ENCODE measurements at regions of chr20 and their contacts with region 1.

Region 1: DNA sequence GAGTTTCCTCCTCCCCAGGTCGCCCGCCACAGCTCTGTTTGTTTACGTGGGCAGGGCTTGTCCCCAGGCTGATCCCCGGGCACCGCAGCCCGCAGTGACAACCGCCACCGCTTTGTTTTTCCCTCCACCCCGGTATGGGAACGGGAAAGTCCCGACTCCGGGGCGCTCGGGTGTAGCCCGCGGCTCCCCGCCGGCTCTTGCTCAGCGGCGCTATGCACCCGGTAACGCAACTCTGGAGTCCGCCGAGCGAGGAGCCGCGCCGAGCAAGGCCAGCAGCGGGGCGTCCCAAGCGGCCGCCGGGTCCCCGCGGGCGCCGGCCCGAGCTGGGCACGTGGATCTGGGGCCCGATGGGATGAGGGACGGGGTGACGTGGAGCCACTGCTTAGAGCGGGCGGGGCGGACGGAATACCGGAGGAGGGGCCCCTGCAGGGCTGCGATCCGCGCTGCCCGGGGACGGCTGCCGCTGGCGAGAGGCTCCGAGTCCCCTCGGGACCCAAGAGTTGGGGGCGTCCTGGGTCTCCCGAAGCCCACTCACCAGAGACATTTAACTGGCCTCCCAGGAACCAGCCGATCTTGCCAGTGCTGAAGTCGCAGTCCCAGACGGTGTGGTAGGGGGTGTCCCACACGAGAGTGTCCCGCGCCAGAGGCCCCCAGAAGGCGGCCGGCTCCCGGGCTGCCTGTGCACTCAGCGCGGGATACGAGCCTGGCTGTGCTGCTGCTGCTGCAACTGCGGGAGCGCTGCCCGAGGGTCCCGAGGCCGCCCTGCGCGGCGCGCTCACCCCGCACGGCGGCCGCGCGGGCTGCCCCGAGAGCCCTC is 497 bp downstream of the ACSS1 start:
- DNase-seq: peak; percentile 56
- H3K4me3 ChIP-seq: peak overlapping the region; percentile 49 to 66 (median 62)
- H3K27ac ChIP-seq: no peak overlapping the region
- H3K4me1 ChIP-seq: peaks cover 17% of the 10 kb centered on the region
- H3K27me3 ChIP-seq: peaks cover 8% of the 10 kb centered on the region
- CTCF ChIP-seq: no peak

Region 2: GRCh38 chr20:25000268-25000821 is 57.1 kb before region 1 on chr20:
- CTCF ChIA-PET with region 1: no interaction called
- dilution Hi-C with region 1: loop called (anchors 5 kb)
- in situ Hi-C with region 1: loop called (anchors 5 kb)
- intact Hi-C with region 1: no loop called
- DNase-seq: peak; percentile 89
- H3K4me3 ChIP-seq: no peak overlapping the region
- H3K27ac ChIP-seq: no peak overlapping the region
- H3K4me1 ChIP-seq: peaks cover 13% of the 10 kb centered on the region
- H3K27me3 ChIP-seq: no peaks in the 10 kb centered on the region
- CTCF ChIP-seq: peak; percentile 6 to 28

Region 3: DNA sequence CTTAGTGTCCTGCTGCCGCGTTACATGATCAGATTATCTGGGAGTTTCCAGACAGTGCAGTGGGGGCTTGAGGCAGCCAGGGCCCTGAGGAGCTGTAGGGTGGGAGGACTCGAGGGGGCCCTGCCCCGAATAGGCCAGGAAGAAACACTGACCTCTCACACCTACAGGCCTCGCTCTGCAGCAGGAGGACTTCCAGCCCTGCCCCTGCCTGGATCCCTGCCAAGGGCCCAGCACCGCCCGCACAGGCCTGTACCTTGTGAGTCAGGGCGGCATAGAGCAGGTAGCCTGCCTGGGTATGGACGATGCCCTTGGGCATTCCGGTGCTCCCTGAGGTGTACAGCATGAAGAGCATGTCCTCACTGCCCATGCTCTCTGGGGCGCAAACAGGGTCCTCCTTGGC is 34.8 kb before region 1 on chr20:
- CTCF ChIA-PET with region 1: no interaction called
- dilution Hi-C with region 1: no loop called
- in situ Hi-C with region 1: loop called in 1 of 2 experiments (anchors 5 kb)
- intact Hi-C with region 1: no loop called
- DNase-seq: peak; percentile 86
- H3K4me3 ChIP-seq: no peak overlapping the region
- H3K27ac ChIP-seq: no peak overlapping the region
- H3K4me1 ChIP-seq: peaks cover 18% of the 10 kb centered on the region
- H3K27me3 ChIP-seq: no peaks in the 10 kb centered on the region
- CTCF ChIP-seq: no peak